Activated CD4-positive, alpha-beta T cell treated with anti-CD3 and anti-CD28 coated beads, Interleukin-2, amount 10 ng/mL, durations not matched to agents 24 days and 14 days (primary cell): ENCODE measurements at regions of chr6 and their contacts with region 1.

Region 1: DNA sequence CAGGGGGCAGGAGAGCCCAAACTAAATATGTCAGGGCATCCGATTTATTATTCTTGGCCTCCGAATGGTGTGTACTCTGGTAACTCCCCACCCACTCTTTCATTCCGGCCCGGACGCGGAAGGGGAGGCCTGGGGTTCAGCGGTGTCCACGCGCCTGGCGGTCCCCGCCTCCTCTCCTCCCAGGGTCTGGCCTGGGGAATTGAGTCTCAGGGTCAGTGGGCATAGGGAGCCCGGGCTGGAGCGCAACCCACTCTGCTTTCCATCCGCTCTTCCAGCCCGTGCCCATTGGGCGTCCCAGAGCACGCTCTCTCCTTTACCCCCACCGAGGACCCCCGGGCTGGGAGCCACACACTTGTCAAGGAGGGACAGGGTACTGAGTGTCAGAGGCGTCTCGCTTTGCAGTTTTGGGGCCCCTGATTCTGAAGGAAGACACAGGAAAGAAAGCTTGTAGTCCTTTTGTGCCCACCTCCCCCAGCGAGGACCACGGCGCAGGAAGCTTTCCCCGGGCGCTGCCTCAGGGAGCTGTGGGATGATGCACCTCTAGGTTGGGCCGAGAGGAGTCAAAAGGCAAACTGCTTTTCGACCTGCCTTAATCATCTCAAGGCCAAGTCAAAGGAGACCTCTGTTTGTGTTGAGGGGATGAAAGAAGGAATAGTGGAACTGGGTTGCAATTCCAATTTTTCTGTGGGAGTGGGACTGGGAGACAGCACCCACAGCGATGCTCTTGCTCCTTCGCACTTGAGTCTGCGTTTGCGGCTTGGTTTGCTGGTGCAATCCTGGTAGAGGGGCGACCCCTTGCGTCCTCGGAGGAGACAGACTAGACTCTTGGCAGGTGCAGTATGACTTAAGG is 2.5 kb downstream of the RSPO3 start:
- DNase-seq: peak; percentile 91
- H3K4me3 Mint-ChIP-seq: peak overlapping the region; percentile 28
- H3K27ac Mint-ChIP-seq: no peak overlapping the region
- H3K4me1 Mint-ChIP-seq: peaks cover 18% of the 10 kb centered on the region
- H3K27me3 Mint-ChIP-seq: peaks cover 71% of the 10 kb centered on the region

Region 2: DNA sequence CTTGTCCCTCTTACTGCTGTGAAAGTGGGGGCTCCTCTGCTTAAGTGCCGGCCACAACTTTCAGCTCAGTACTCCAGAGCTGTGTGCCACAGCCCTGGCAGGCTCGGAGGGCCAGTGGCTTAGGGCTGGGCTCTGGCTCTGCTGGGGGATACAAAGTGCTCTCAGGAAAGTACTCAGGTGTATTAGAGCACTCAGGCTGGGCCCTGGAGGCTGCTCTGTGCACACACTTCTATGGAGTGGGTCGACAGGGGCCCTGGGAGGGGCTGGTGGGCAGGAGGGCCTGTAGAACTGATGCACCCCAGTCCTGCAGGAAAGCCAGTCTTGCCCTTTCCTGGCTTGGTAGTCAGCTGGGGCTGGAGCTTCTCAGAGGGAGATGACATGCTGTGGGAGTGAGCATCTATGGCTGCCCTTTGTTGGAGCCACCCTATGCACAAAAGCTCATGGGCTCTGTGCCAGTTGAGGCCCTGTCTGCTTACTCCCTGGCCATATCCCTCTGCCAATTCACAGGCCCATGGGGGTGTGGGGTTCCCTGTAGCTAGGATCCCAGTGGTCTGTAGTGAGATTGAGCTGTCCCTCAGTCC is 759.1 kb before region 1 on chr6:
- intact Hi-C with region 1: loop called (anchors 2 kb)
- DNase-seq: no peak
- H3K4me3 Mint-ChIP-seq: no peak overlapping the region
- H3K27ac Mint-ChIP-seq: no peak overlapping the region
- H3K4me1 Mint-ChIP-seq: no peaks in the 10 kb centered on the region
- H3K27me3 Mint-ChIP-seq: no peaks in the 10 kb centered on the region

Region 3: DNA sequence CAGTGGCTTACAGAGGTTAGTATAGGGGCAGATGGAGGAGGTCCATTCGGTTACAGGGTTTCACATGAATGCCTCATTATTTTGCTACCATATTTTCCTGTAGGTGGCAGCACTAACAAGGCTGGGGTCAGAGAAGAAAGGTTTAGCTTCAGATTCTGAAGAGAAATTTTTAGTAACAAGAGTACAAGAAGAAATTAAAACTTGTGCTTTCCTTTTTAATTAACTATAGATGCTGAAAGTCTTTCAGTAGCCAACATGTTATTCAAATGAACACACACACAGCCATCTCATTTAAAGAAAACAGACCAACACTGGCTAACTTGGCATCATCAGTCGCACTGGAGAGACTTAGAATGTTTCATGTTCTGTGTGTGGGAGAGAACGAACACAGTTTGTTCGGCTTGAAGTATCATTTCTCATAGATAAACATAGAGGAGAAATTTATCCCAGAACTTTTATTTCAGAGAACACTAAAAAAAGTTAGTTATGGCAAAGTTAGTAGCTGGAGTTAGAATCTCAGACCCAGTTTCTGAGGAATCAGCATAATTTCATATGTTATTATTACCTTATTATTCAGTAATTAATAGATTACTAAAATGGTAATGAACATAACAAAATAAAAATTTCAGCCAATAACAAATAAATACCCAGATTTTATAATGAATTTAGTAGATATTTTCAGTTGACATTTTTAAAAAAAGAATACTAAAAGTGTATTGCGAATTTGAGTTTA is 316.5 kb before region 1 on chr6:
- intact Hi-C with region 1: loop called (anchors 1 kb)
- DNase-seq: peak; percentile 68
- H3K4me3 Mint-ChIP-seq: no peak overlapping the region
- H3K27ac Mint-ChIP-seq: no peak overlapping the region
- H3K4me1 Mint-ChIP-seq: no peaks in the 10 kb centered on the region
- H3K27me3 Mint-ChIP-seq: peaks cover 8% of the 10 kb centered on the region